ENCODE measurements at regions of chr4 and their contacts with region 1.

Region 1: GRCh38 chr4:7843831-7844593 is 95.6 kb downstream of the AFAP1 start:
- DNase-seq: peak; percentile 65
- H3K4me3 ChIP-seq: no peak overlapping the region
- H3K27ac ChIP-seq: peak overlapping the region; percentile 100
- H3K27me3 ChIP-seq: no peaks in the 10 kb centered on the region
- CTCF ChIP-seq: peak; percentile 72

Region 2: GRCh38 chr4:7811536-7812191 is 32.3 kb before region 1 on chr4:
- CTCF ChIA-PET with region 1: interaction called, 14 read pairs
- POLR2A ChIA-PET with region 1: interaction called, 20 read pairs
- DNase-seq: peak; percentile 83
- H3K4me3 ChIP-seq: 0 out of 2 replicates have a peak overlapping the region, but pooled peaks have one; percentile 7
- H3K27ac ChIP-seq: peak overlapping the region; percentile 96
- H3K27me3 ChIP-seq: no peaks in the 10 kb centered on the region
- CTCF ChIP-seq: no peak

Region 3: DNA sequence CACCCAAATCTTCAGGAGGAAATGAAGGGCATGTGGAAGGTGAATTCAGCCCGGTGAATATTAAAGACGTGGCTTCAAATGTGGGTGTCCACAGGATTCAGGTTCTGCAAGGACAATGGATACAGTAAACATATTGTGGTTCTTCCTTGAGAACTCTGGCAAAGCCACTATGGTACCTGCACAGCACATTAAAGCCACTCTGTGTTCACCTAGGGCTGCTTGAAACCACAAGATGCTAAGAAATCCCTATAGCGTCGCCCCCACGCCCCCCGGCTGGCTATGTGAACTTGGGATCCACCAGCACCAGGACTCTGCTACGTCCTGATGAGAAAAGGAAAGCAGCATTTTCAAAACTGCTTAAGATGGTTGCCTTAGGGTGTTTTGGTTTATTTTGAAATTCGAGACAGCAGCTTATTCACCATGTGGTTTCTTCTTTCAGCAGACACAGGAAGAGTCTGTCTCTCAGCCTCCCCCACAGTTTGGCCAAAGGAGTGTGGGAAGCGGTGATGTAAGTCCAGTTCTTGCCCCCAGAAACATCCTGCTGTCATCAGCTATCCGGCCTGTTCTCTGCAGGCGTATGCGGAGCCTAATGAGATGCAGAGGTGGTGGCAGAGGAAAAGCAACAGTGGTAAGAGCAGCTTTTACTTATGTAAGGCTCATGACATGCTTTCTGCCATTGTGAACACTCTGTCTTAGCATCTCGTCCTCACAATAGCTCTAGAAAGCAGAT is 15.9 kb before region 1 on chr4:
- CTCF ChIA-PET with region 1: interaction called, 5 read pairs
- POLR2A ChIA-PET with region 1: interaction called, 14 read pairs
- DNase-seq: peak; percentile 97
- H3K4me3 ChIP-seq: peak overlapping the region; percentile 17; the same call in 1 of the 2 replicates
- H3K27ac ChIP-seq: peak overlapping the region; percentile 96
- H3K27me3 ChIP-seq: no peaks in the 10 kb centered on the region
- CTCF ChIP-seq: no peak

Region 4: GRCh38 chr4:7857238-7857701 is 13.3 kb after region 1 on chr4:
- CTCF ChIA-PET with region 1: interaction called, 11 read pairs
- POLR2A ChIA-PET with region 1: interaction called, 7 read pairs
- DNase-seq: peak; percentile 95
- H3K4me3 ChIP-seq: no peak overlapping the region
- H3K27ac ChIP-seq: peak overlapping the region; percentile 98
- H3K27me3 ChIP-seq: no peaks in the 10 kb centered on the region
- CTCF ChIP-seq: no peak